ENCODE measurements at regions of chr2 and their contacts with region 1.

Region 1: GRCh38 chr2:167212014-167212648 is 323.9 kb downstream of the XIRP2 start:
- DNase-seq: peak; percentile 57
- H3K4me3 ChIP-seq: no peak overlapping the region
- H3K27ac ChIP-seq: no peak overlapping the region
- H3K4me1 ChIP-seq: no peaks in the 10 kb centered on the region
- H3K27me3 ChIP-seq: no peaks in the 10 kb centered on the region
- CTCF ChIP-seq: peak; percentile 63

Region 2: GRCh38 chr2:166539340-166540162 is 672.6 kb before region 1 on chr2:
- intact Hi-C with region 1: loop called (anchors 5 kb)
- DNase-seq: peak; percentile 26
- H3K4me3 ChIP-seq: no peak overlapping the region
- H3K27ac ChIP-seq: no peak overlapping the region
- H3K4me1 ChIP-seq: no peaks in the 10 kb centered on the region
- H3K27me3 ChIP-seq: no peaks in the 10 kb centered on the region
- CTCF ChIP-seq: peak; percentile 71

Region 3: DNA sequence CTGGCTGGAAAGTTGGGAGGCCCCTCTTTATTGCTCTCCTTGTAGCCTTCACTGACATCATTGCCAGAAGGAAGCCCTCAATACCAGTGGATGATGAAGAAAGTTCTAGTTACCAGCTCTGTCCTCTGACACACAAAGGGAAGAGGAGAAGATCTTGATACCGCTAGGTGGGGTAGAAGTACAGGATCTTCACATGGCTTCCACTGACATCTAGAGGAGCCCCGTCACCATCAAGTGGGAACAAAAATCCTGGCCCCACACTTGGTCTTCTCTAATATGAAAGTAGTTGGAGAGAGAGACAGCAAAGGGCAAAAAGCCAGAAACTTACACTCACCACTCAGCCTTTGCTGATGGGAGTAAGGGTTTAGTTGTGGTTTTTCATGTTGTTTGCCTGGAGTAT is 311.4 kb before region 1 on chr2:
- intact Hi-C with region 1: loop called (anchors 5 kb)
- DNase-seq: no peak
- H3K4me3 ChIP-seq: no peak overlapping the region
- H3K27ac ChIP-seq: no peak overlapping the region
- H3K4me1 ChIP-seq: no peaks in the 10 kb centered on the region
- H3K27me3 ChIP-seq: no peaks in the 10 kb centered on the region
- CTCF ChIP-seq: no peak

Region 4: DNA sequence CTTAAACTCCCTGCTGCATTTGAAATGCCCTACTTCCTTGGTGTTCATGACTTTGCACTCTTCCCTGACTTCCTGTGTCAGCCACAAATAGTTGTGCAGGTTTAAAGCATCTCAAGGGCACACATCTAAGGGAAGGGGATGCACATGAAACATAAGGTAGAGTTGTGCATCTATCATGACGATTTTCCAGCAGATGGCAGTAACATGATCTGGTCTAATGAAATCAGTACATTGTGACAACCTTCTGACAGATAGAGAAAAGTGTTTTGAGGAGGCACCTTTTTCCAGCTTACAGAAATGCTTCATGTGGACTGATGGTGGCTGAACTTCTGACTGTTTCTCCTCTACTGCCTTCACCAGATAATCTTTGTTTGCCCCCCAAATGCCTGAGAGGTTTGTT is 85.0 kb before region 1 on chr2:
- intact Hi-C with region 1: loop called (anchors 5 kb)
- DNase-seq: no peak
- H3K4me3 ChIP-seq: no peak overlapping the region
- H3K27ac ChIP-seq: no peak overlapping the region
- H3K4me1 ChIP-seq: no peaks in the 10 kb centered on the region
- H3K27me3 ChIP-seq: no peaks in the 10 kb centered on the region
- CTCF ChIP-seq: no peak